Heart right ventricle (tissue), 16 donors: ENCODE measurements at regions of chr3 and their contacts with region 1.

Region 1: GRCh38 chr3:31391150-31391549 is 141.6 kb upstream of the STT3B start:
- DNase-seq: no peak
- ATAC-seq: no peak
- H3K4me3 ChIP-seq: no peak overlapping the region
- H3K27ac ChIP-seq: no peak overlapping the region
- H3K4me1 ChIP-seq: no peaks in the 10 kb centered on the region
- H3K27me3 ChIP-seq: no peaks in the 10 kb centered on the region
- CTCF ChIP-seq: no peak

Region 2: DNA sequence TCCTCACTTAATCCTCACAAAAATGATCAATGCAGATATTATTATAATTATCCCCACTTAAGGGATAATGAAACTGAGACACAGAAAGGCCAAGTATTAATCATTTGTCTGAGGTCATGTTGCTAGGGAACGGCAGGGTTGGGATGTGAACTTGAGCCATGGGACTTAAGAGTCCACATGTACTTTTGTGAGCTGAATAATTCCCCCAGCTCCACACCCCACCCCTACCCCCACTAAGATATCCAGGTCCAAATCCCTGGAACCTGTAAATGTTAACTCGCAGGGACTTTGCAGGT is 206.1 kb before region 1 on chr3:
- intact Hi-C with region 1: no loop called
- DNase-seq: no peak
- ATAC-seq: peak in 3 of 8 donors; percentile 43 to 57 (median 51)
- H3K4me3 ChIP-seq: no peak overlapping the region
- H3K27ac ChIP-seq: peak overlapping the region in 1 of 10 donors; percentile 12
- H3K4me1 ChIP-seq: peaks cover 0 to 10% (median 0%) of the 10 kb centered on the region in 9 donors
- H3K27me3 ChIP-seq: no peaks in the 10 kb centered on the region
- CTCF ChIP-seq: no peak

Region 3: DNA sequence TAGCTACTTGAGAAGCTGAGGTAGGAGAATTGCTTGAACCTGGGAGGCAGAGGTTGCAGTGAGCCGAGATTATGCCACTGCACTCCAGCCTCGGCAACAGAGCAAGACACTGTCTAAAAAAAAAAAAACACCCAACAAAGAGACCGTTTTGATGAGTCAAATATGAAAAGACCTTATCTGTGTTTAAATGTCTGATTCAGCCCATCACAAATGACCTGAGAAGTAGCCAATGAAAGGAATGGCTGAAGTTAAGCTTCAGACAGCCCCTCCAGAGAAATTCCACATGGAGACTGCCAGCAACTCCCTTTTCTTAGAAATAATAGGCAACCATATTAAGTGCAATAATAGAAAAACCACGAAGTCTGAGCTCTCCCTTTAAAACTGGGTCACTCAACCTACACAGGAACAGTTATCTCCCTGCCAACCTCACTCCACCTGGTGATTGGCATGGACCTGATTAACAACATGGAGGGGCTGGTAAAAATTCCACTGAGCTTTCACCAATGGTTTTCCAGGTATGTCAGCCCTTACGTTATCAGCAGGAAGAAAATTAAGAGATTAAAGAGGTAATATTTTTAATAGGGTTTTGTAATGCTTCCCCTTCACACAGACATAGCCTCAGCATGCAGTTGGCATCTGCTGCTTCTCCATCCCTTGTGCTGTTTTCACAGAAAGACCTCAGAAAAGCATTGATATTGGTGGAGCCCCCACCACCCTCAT is 96.6 kb before region 1 on chr3:
- intact Hi-C with region 1: no loop called
- DNase-seq: no peak
- ATAC-seq: no peak
- H3K4me3 ChIP-seq: no peak overlapping the region
- H3K27ac ChIP-seq: no peak overlapping the region
- H3K4me1 ChIP-seq: peaks cover 0 to 4% (median 0%) of the 10 kb centered on the region in 9 donors
- H3K27me3 ChIP-seq: peaks cover 0 to 7% (median 0%) of the 10 kb centered on the region in 7 donors
- CTCF ChIP-seq: no peak

Region 4: DNA sequence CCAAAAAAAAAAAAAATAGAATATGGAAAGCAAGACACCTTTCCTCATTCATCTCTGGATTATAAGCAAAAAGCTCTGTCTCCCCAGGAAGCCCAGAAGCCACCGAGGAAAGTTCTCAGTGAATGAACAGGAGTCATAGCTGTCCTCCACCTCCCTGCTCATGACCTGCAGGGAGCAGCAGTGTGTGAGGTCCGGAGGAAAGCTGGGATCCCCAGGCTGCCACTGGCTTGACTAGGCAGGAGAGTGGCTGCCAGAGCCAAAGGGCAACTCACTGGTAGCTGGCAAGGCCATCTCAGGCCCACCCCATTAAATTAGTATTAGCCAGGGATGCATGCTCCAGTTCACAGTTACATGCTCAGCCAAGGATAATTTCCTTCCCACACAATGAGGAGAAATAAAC is 50.0 kb before region 1 on chr3:
- intact Hi-C with region 1: loop called in 1 of 10 experiments (anchors 2 kb)
- DNase-seq: no peak
- ATAC-seq: no peak
- H3K4me3 ChIP-seq: no peak overlapping the region
- H3K27ac ChIP-seq: no peak overlapping the region
- H3K4me1 ChIP-seq: no peaks in the 10 kb centered on the region
- H3K27me3 ChIP-seq: no peaks in the 10 kb centered on the region
- CTCF ChIP-seq: peak in 1 of 9 donors; percentile 26